Body of pancreas (tissue), 4 donors: ENCODE measurements at regions of chr10 and their contacts with region 1.

Region 1: GRCh38 chr10:71812016-71812912 is 38.8 kb downstream of the PSAP start:
- DNase-seq: peak; percentile 62 to 71 (median 68)
- ATAC-seq: peak; percentile 66
- H3K4me3 ChIP-seq: no peak overlapping the region
- H3K27ac ChIP-seq: peak overlapping the region in 2 of 4 donors; percentile 15 to 30
- H3K4me1 ChIP-seq: peaks cover 15% of the 10 kb centered on the region
- H3K27me3 ChIP-seq: no peaks in the 10 kb centered on the region
- CTCF ChIP-seq: peak; percentile 37 to 80 (median 72)
- POLR2A ChIP-seq: no peak

Region 2: DNA sequence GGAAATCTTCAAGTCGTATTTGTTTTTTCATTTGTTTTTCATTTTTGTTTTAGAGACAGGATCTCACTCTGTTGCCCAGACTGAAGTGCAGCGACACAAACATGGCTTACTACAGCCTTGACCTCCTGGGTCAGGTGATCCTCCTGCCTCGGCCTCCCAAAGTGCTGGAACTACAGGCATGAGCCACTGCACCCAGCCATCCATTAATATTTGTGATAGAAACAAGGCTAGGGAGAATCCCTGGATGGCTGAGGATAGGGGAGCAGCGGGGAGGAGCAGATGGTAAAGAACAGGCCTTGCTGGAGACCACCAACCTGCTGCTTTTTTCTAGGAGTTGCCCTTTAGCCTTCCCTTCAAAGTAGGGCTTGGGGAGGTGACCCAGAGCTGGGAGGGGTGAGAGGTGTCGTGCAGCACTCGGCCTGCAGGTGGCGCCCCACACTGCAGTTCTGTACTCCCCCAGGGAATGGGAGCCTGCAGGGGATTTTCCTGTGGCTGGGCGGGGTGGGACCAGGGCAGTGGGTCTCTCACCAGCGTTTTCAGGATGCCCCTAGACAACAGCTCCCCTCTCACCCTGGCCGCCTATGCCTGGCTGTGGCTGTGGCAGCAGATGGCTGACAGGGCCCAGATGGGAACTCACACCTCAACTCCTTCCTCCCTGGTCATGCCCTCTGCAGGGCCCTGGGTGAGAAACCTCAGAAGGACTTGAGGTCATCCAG is 428.1 kb before region 1 on chr10:
- intact Hi-C with region 1: loop called (anchors 10 kb)
- DNase-seq: peak; percentile 63 to 81 (median 69)
- ATAC-seq: peak; percentile 89
- H3K4me3 ChIP-seq: no peak overlapping the region
- H3K27ac ChIP-seq: no peak overlapping the region
- H3K4me1 ChIP-seq: no peaks in the 10 kb centered on the region
- H3K27me3 ChIP-seq: no peaks in the 10 kb centered on the region
- CTCF ChIP-seq: peak; percentile 72 to 94 (median 82)
- POLR2A ChIP-seq: no peak

Region 3: GRCh38 chr10:71899665-71900412 is 87.6 kb after region 1 on chr10:
- intact Hi-C with region 1: no loop called
- DNase-seq: no peak
- ATAC-seq: no peak
- H3K4me3 ChIP-seq: no peak overlapping the region
- H3K27ac ChIP-seq: no peak overlapping the region
- H3K4me1 ChIP-seq: no peaks in the 10 kb centered on the region
- H3K27me3 ChIP-seq: no peaks in the 10 kb centered on the region
- CTCF ChIP-seq: no peak
- POLR2A ChIP-seq: no peak

Region 4: GRCh38 chr10:71921324-71922027 is 109.2 kb after region 1 on chr10:
- intact Hi-C with region 1: no loop called
- DNase-seq: peak; percentile 14 to 39 (median 29)
- ATAC-seq: peak; percentile 18
- H3K4me3 ChIP-seq: no peak overlapping the region
- H3K27ac ChIP-seq: peak overlapping the region in 1 of 4 donors; percentile 3
- H3K4me1 ChIP-seq: peaks cover 11% of the 10 kb centered on the region
- H3K27me3 ChIP-seq: no peaks in the 10 kb centered on the region
- CTCF ChIP-seq: no peak
- POLR2A ChIP-seq: no peak